IMR-90 (cell line): ENCODE measurements at regions of chr6 and their contacts with region 1.

Region 1: DNA sequence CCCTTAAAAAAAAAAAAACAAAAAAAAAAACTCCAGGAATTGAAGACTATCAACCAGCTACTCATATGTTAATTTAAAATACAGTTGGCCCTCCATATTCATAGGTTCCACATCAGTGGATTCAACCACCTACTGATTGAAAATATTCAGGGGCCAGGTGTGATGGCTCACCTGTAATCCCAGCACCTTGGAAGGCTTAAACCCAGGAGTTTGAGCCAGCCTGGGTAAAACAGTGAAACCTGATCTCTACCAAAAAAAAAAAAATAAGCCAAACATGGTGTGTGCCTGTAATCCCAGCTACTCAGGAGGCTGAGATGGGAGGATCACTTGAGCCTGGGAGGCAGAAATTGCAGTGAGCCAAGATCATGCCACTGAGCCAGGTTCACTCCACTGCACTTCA is 72.4 kb upstream of the SMIM8 start:
- DNase-seq: no peak
- ATAC-seq: no peak
- H3K4me3 ChIP-seq: no peak overlapping the region
- H3K27ac ChIP-seq: no peak overlapping the region
- H3K4me1 ChIP-seq: no peaks in the 10 kb centered on the region
- H3K27me3 ChIP-seq: no peaks in the 10 kb centered on the region
- CTCF ChIP-seq: no peak
- POLR2A ChIP-seq: no peak
- RAD21 ChIP-seq: no peak

Region 2: GRCh38 chr6:87029711-87030314 is 220.2 kb before region 1 on chr6:
- CTCF ChIA-PET with region 1: no interaction called
- POLR2A ChIA-PET with region 1: no interaction called
- dilution Hi-C with region 1: no loop called
- in situ Hi-C with region 1: no loop called
- intact Hi-C with region 1: no loop called
- DNase-seq: peak; percentile 72
- ATAC-seq: peak; percentile 85
- H3K4me3 ChIP-seq: no peak overlapping the region
- H3K27ac ChIP-seq: no peak overlapping the region
- H3K4me1 ChIP-seq: no peaks in the 10 kb centered on the region
- H3K27me3 ChIP-seq: no peaks in the 10 kb centered on the region
- CTCF ChIP-seq: peak; percentile 60
- POLR2A ChIP-seq: no peak
- RAD21 ChIP-seq: peak; percentile 33

Region 3: GRCh38 chr6:87049779-87050178 is 200.2 kb before region 1 on chr6:
- CTCF ChIA-PET with region 1: no interaction called
- POLR2A ChIA-PET with region 1: no interaction called
- dilution Hi-C with region 1: no loop called
- in situ Hi-C with region 1: no loop called
- intact Hi-C with region 1: no loop called
- DNase-seq: no peak
- ATAC-seq: no peak
- H3K4me3 ChIP-seq: no peak overlapping the region
- H3K27ac ChIP-seq: no peak overlapping the region
- H3K4me1 ChIP-seq: no peaks in the 10 kb centered on the region
- H3K27me3 ChIP-seq: no peaks in the 10 kb centered on the region
- CTCF ChIP-seq: no peak
- POLR2A ChIP-seq: no peak
- RAD21 ChIP-seq: no peak

Region 4: GRCh38 chr6:87341899-87342298 is 91.9 kb after region 1 on chr6:
- CTCF ChIA-PET with region 1: no interaction called
- POLR2A ChIA-PET with region 1: interaction called, 20 read pairs
- dilution Hi-C with region 1: no loop called
- in situ Hi-C with region 1: no loop called
- intact Hi-C with region 1: no loop called
- DNase-seq: no peak
- ATAC-seq: no peak
- H3K4me3 ChIP-seq: no peak overlapping the region
- H3K27ac ChIP-seq: no peak overlapping the region
- H3K4me1 ChIP-seq: no peaks in the 10 kb centered on the region
- H3K27me3 ChIP-seq: no peaks in the 10 kb centered on the region
- CTCF ChIP-seq: no peak
- POLR2A ChIP-seq: no peak
- RAD21 ChIP-seq: no peak